ENCODE measurements at regions of chr19 and their contacts with region 1.

Region 1: GRCh38 chr19:5904352-5905113 is at the start of gene VMAC:
- DNase-seq: peak; percentile 99 to 100 (median 100)
- ATAC-seq: peak; percentile 76
- H3K4me3 ChIP-seq: peak within 1 kb of the TSS; percentile 89
- H3K4me3 Mint-ChIP-seq: peak within 1 kb of the TSS; percentile 93
- H3K27ac ChIP-seq: peak within 1 kb of the TSS; percentile 91
- H3K27ac Mint-ChIP-seq: peak within 1 kb of the TSS; percentile 99
- H3K4me1 ChIP-seq: peaks cover 53% of the 10 kb centered on the region
- H3K4me1 Mint-ChIP-seq: peaks cover 35% of the 10 kb centered on the region
- H3K27me3 ChIP-seq: no peaks in the 10 kb centered on the region
- H3K27me3 Mint-ChIP-seq: no peaks in the 10 kb centered on the region
- CTCF ChIP-seq: no peak
- total RNA-seq, gene VMAC: 23.4 to 25.3 TPM

Region 2: GRCh38 chr19:5665796-5666513 is 238.6 kb before region 1 on chr19:
- CTCF ChIA-PET with region 1: no interaction called
- POLR2A ChIA-PET with region 1: no interaction called
- intact Hi-C with region 1: no loop called
- DNase-seq: no peak
- ATAC-seq: no peak
- H3K4me3 ChIP-seq: no peak overlapping the region
- H3K4me3 Mint-ChIP-seq: no peak overlapping the region
- H3K27ac ChIP-seq: no peak overlapping the region
- H3K27ac Mint-ChIP-seq: no peak overlapping the region
- H3K4me1 ChIP-seq: no peaks in the 10 kb centered on the region
- H3K4me1 Mint-ChIP-seq: no peaks in the 10 kb centered on the region
- H3K27me3 ChIP-seq: no peaks in the 10 kb centered on the region
- H3K27me3 Mint-ChIP-seq: no peaks in the 10 kb centered on the region
- CTCF ChIP-seq: no peak

Region 3: DNA sequence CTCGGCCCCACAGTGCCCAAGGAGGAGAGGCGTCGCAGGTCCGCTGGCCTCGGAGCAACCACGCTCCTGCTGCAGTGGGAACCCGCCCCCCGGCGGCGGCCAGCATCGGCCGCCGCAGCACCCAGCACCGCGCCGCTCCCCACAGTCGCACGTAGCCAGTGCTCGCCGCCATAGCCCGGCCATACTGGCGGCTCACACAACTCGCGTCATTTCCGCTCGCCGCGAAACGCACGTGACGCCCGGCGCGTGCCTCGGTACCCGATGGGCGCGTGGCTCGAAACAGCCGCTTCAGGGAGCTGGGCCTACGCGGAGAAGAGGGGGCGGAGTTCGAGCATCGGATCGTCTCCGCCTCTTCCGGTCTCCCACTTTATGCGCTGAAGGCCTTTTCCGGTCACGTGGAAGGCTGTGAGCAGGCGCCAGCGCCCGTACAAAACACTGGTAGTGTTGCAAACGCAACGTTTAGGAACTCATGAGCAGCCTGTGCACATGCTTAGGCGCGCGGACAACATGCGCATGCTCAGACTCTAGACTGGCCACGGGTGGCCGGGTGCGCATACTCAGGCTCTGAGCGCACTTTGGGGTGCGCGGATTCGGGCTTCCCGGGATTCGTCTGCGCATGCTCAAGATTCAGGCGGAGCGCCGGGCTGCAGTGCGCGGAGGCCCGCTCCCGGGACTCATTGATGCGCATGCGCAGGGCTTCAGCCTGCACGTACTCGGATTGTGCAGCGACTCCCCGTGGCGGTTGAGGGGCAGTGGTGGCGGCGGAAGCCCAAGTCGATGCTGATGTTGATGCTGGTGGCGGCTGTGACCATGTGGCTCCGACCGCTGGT is 184.4 kb before region 1 on chr19 and contains the starts of genes CATSPERD and LONP1:
- CTCF ChIA-PET with region 1: no interaction called
- POLR2A ChIA-PET with region 1: interaction called, 15 read pairs
- intact Hi-C with region 1: no loop called
- DNase-seq: peak; percentile 95 to 100 (median 98)
- ATAC-seq: peak; percentile 86
- H3K4me3 ChIP-seq: peak within 1 kb of the TSS; percentile 69
- H3K4me3 Mint-ChIP-seq: peak within 1 kb of the TSS; percentile 94
- H3K27ac ChIP-seq: peak within 1 kb of the TSS; percentile 82 to 88
- H3K27ac Mint-ChIP-seq: peak within 1 kb of the TSS; percentile 96
- H3K4me1 ChIP-seq: peaks cover 34% of the 10 kb centered on the region
- H3K4me1 Mint-ChIP-seq: peaks cover 26% of the 10 kb centered on the region
- H3K27me3 ChIP-seq: no peaks in the 10 kb centered on the region
- H3K27me3 Mint-ChIP-seq: no peaks in the 10 kb centered on the region
- CTCF ChIP-seq: peak; percentile 83
- total RNA-seq, gene CATSPERD: not detected
- total RNA-seq, gene LONP1: 88.7 to 91.0 TPM

Region 4: GRCh38 chr19:5827891-5828660 is 76.5 kb before region 1 on chr19:
- CTCF ChIA-PET with region 1: no interaction called
- POLR2A ChIA-PET with region 1: interaction called, 83 read pairs
- intact Hi-C with region 1: loop called (anchors 1 to 2 kb)
- DNase-seq: peak; percentile 85 to 98 (median 92)
- ATAC-seq: peak; percentile 81
- H3K4me3 ChIP-seq: peak overlapping the region; percentile 86
- H3K4me3 Mint-ChIP-seq: peak overlapping the region; percentile 98
- H3K27ac ChIP-seq: peak overlapping the region; percentile 69 to 86
- H3K27ac Mint-ChIP-seq: peak overlapping the region; percentile 95
- H3K4me1 ChIP-seq: peaks cover 31% of the 10 kb centered on the region
- H3K4me1 Mint-ChIP-seq: peaks cover 18% of the 10 kb centered on the region
- H3K27me3 ChIP-seq: peaks cover 0 to 3% of the 10 kb centered on the region in 2 experiments
- H3K27me3 Mint-ChIP-seq: no peaks in the 10 kb centered on the region
- CTCF ChIP-seq: no peak

Region 5: DNA sequence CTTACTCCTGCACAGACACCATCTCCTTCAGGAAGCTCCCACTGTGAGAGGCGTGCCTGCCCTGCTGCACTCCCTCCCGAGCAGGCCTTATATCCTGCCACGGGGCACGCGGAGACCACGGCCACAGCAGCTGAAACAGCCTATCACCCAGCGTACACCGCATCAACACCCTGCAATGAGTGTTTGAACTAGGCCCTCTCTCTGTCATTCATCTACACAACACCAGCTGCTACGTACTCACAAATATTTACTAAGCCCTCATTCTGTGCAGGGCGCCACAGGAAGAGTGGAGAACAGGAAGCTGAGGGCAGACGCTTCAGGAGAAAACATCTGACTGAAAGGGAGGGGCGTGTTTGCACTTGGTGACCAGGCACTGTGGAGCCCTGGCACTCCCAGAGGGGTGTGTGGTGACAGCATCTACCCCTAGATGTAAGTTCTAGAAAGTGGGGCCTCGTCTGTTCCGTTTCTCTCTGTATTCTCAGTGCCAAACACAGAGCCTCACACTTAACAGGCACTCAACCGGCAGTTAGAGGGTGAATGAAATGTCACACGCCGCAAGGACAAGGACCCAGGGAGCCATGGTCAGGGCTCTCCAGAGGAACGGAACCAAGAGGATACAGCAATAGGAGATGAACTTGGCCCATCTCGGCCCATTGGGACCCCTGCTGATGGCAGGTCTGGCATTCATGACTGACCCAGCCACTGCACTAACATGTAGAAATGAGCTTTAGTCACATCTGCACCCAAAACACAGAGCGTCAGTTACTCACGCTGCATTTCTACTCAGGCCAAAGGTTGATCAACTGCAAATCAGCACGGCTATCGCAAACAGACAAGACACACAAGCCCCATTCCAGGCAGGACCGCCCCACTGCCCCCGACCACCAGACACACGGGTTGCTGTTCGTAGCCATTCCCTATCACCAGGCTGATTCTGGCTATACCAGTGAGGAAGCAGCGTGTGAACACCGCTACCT is 57.7 kb after region 1 on chr19:
- CTCF ChIA-PET with region 1: interaction called, 11 read pairs
- POLR2A ChIA-PET with region 1: interaction called, 67 read pairs
- intact Hi-C with region 1: loop called (anchors 1 to 5 kb)
- DNase-seq: peak; percentile 60 to 93 (median 79)
- ATAC-seq: peak; percentile 93
- H3K4me3 ChIP-seq: peak overlapping the region; percentile 41
- H3K4me3 Mint-ChIP-seq: peak overlapping the region; percentile 81
- H3K27ac ChIP-seq: peak overlapping the region; percentile 86 to 91
- H3K27ac Mint-ChIP-seq: peak overlapping the region; percentile 98
- H3K4me1 ChIP-seq: peaks cover 94% of the 10 kb centered on the region
- H3K4me1 Mint-ChIP-seq: peaks cover 97% of the 10 kb centered on the region
- H3K27me3 ChIP-seq: no peaks in the 10 kb centered on the region
- H3K27me3 Mint-ChIP-seq: no peaks in the 10 kb centered on the region
- CTCF ChIP-seq: no peak

Region 6: GRCh38 chr19:6110360-6110977 is 205.9 kb after region 1 on chr19 and contains the start of gene RFX2:
- CTCF ChIA-PET with region 1: no interaction called
- POLR2A ChIA-PET with region 1: interaction called, 4 read pairs
- intact Hi-C with region 1: loop called in 1 of 2 experiments (anchors 2 kb)
- DNase-seq: peak; percentile 98 to 100 (median 99)
- ATAC-seq: peak; percentile 96
- H3K4me3 ChIP-seq: peak within 1 kb of the TSS; percentile 65
- H3K4me3 Mint-ChIP-seq: peak within 1 kb of the TSS; percentile 89
- H3K27ac ChIP-seq: peak within 1 kb of the TSS; percentile 21 to 52
- H3K27ac Mint-ChIP-seq: peak within 1 kb of the TSS; percentile 74
- H3K4me1 ChIP-seq: peaks cover 27% of the 10 kb centered on the region
- H3K4me1 Mint-ChIP-seq: peaks cover 25% of the 10 kb centered on the region
- H3K27me3 ChIP-seq: peaks cover 2 to 4% of the 10 kb centered on the region in 2 experiments
- H3K27me3 Mint-ChIP-seq: peaks cover 15% of the 10 kb centered on the region
- CTCF ChIP-seq: no peak
- total RNA-seq, gene RFX2: 4.8 to 5.5 TPM

Measured in CD4-positive, alpha-beta T cell (primary cell).